ENCODE measurements at regions of chr4 and their contacts with region 1.

Region 1: DNA sequence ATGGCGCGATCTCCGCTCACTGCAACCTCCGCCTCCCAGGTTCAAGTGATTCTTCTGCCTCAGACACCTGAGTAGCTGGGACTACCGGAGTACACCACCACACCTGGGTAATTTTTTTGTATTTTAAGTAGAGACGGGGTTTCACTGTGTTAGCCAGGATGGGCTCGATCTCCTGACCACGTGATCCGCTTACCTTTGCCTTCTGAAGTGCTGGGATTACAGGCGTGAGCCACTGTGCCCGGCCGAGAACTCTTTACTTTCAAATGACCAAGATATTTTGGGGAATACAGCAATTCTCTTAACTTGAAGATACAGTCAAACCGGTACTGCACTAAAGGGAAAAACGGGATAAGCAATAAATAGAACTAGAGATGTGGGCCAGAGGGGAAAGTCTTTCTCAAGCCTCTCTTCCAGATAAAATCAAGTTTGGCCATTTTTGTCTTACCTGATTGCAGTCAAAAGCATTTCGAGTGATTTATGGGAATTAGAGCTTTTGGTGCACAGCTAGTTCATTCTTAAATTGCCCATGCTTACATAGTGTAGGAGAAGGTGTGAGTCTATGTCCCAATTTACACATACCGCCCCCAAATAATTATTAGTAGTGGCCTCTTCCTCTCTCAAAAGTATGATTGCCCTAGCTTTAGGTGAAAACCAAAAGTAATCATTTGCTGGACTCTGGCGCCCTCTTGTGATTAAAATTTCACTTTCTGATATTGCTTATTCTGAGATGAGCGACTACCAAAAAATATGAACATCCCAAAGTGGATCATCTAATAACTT is 53.2 kb upstream of the ABCG2 start:
- DNase-seq: peak; percentile 85
- H3K4me3 ChIP-seq: no peak overlapping the region
- H3K27ac ChIP-seq: no peak overlapping the region
- H3K4me1 ChIP-seq: peaks cover 0 to 4% (median 0%) of the 10 kb centered on the region in 4 donors
- H3K27me3 ChIP-seq: no peaks in the 10 kb centered on the region
- CTCF ChIP-seq: peak; percentile 61 to 79 (median 67)
- EP300 ChIP-seq: no peak
- POLR2A ChIP-seq: no peak

Region 2: GRCh38 chr4:87543835-87544461 is 667.7 kb before region 1 on chr4:
- intact Hi-C with region 1: loop called (anchors 10 kb)
- DNase-seq: peak; percentile 77
- H3K4me3 ChIP-seq: no peak overlapping the region
- H3K27ac ChIP-seq: peak overlapping the region in 3 of 4 donors; percentile 82 to 87 (median 83)
- H3K4me1 ChIP-seq: peaks cover 19 to 49% (median 38%) of the 10 kb centered on the region in 4 donors
- H3K27me3 ChIP-seq: no peaks in the 10 kb centered on the region
- CTCF ChIP-seq: peak; percentile 63 to 76 (median 75)
- EP300 ChIP-seq: no peak
- POLR2A ChIP-seq: no peak

Region 3: DNA sequence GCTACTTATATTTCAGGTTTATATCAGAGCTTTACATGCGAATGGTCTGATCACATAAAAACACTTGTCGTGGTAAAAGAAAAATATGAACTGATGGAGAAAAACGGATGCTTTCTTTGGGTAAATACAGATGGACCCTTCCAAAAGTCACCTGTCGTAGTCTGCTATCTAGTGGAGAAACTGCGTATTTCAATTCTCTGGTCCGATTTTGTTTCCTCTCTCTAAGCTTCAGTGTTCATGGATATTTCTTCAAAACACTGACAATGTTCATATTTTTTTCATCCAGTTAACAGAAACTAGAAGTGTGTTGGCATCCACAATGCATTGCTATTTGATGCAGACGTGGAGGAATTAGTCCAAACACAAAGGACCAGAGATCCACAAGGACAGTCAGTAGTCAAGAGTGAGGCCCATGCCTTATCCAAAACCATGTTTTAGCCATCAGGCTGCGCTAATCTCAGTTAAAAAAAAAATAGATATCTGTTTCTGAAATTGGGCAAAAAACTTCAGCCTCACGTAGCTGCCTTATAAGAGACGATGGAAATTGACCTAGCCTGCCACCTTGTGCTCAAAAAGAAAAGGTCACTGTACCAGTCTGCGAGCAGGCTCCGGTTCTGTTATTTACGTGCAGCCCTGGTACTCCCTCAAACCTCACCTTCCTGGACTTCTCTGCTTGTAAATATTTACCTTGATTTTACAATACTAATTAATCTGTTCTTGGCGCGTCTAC is 362.9 kb before region 1 on chr4:
- intact Hi-C with region 1: loop called (anchors 2 kb)
- DNase-seq: no peak
- H3K4me3 ChIP-seq: peak overlapping the region; percentile 27 to 44 (median 33)
- H3K27ac ChIP-seq: peak overlapping the region in 2 of 4 donors; percentile 15 to 42
- H3K4me1 ChIP-seq: peaks cover 1 to 13% (median 10%) of the 10 kb centered on the region in 4 donors
- H3K27me3 ChIP-seq: no peaks in the 10 kb centered on the region
- CTCF ChIP-seq: peak; percentile 60 to 67 (median 63)
- EP300 ChIP-seq: no peak
- POLR2A ChIP-seq: no peak

Region 4: GRCh38 chr4:88033309-88033708 is 178.4 kb before region 1 on chr4:
- intact Hi-C with region 1: loop called (anchors 5 kb)
- DNase-seq: no peak
- H3K4me3 ChIP-seq: no peak overlapping the region
- H3K27ac ChIP-seq: no peak overlapping the region
- H3K4me1 ChIP-seq: no peaks in the 10 kb centered on the region
- H3K27me3 ChIP-seq: no peaks in the 10 kb centered on the region
- CTCF ChIP-seq: peak; percentile 45 to 67 (median 52)
- EP300 ChIP-seq: no peak
- POLR2A ChIP-seq: no peak

Region 5: GRCh38 chr4:88185906-88186305 is 25.8 kb before region 1 on chr4:
- intact Hi-C with region 1: no loop called
- DNase-seq: no peak
- H3K4me3 ChIP-seq: no peak overlapping the region
- H3K27ac ChIP-seq: no peak overlapping the region
- H3K4me1 ChIP-seq: no peaks in the 10 kb centered on the region
- H3K27me3 ChIP-seq: no peaks in the 10 kb centered on the region
- CTCF ChIP-seq: no peak
- EP300 ChIP-seq: no peak
- POLR2A ChIP-seq: no peak

Region 6: DNA sequence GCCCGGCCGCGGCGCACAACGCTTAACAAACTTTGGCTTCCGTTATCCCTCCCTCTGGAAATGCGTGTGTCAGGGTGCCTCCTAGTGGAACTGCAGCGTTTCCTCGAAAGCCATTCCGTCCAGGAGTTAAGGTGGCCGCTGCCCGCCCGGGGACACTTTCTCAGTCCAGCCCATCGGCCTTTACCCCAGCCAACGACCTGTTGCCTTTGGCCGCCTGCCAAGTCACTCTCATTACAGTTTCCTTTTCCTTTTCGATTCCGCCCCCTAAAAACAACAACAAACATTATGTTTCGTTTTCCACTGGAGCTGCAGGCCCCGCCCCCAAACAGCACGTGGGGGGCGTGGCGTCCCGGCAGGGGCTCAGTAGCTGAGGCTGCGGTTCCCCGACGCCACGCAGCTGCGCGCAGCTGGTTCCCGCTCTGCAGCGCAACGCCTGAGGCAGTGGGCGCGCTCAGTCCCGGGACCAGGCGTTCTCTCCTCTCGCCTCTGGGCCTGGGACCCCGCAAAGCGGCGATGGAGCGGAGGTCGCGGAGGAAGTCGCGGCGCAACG is 245.2 kb after region 1 on chr4 and contains the start of gene HERC5:
- intact Hi-C with region 1: loop called (anchors 5 kb)
- DNase-seq: peak; percentile 96
- H3K4me3 ChIP-seq: peak within 1 kb of the TSS; percentile 77 to 90 (median 81)
- H3K27ac ChIP-seq: peak within 1 kb of the TSS; percentile 71 to 91 (median 85)
- H3K4me1 ChIP-seq: peaks cover 0 to 17% (median 14%) of the 10 kb centered on the region in 4 donors
- H3K27me3 ChIP-seq: no peaks in the 10 kb centered on the region
- CTCF ChIP-seq: peak; percentile 68 to 70 (median 68)
- EP300 ChIP-seq: no peak
- POLR2A ChIP-seq: no peak
- total RNA-seq, gene HERC5: 2.9 to 4.5 (median 3.9) TPM

Region 7: GRCh38 chr4:88467392-88467791 is 255.7 kb after region 1 on chr4:
- intact Hi-C with region 1: no loop called
- DNase-seq: no peak
- H3K4me3 ChIP-seq: no peak overlapping the region
- H3K27ac ChIP-seq: no peak overlapping the region
- H3K4me1 ChIP-seq: no peaks in the 10 kb centered on the region
- H3K27me3 ChIP-seq: no peaks in the 10 kb centered on the region
- CTCF ChIP-seq: no peak
- EP300 ChIP-seq: no peak
- POLR2A ChIP-seq: no peak

Measured in esophagus muscularis mucosa (tissue), 4 donors.